Colonic mucosa (tissue), 4 donors: ENCODE measurements at regions of chr4 and their contacts with region 1.

Region 1: DNA sequence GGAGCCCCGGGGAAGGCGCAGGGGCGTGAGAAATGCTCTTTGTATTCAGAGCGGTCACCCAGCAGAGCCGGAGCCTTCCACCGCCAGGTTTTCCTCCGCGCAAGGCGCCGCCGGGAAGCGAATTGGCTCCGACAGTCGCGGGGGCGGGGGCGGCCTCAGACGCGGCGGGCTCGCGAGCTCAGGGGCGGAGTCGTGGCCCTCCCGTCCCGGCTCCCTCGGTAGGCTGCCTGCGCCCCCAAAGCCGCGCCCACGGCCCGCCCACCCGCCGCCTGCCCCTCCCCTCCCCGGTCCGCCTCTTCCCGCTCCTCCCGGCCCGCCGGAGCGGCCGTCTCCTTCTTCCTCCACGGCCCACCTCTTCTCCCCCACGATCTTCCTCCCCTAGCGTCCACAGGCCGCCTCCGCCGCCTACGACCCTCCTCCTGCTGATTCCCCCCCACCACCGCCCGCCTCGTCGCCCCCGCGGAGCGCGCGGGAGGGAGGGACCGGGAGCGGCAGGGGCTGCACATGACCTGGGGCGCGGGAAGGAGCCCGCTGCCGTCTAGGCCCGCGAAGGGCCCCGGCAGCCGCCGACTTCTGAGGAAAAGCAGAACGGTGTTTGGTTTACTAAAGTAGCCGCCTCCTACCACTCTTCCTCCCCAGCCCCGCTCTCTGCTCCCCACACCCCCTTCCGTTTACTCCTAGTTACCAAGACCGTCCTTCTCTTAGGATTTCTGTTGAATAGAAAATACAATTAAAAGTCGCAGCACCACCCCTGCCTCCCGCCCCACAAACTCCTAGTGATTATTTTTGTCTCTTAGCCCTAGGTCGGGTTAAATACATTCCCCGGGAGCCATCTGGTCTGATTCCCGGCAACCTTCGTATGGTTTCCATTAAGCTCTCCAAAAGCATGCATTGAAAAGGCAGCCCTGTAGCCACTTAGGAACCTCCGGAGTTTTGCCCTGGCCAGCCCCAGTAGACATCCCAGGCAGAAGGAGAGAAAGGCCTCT is 53.2 kb downstream of the C4orf51 start:
- DNase-seq: peak; percentile 91
- H3K4me3 ChIP-seq: peak overlapping the region; percentile 48
- H3K27ac ChIP-seq: peak overlapping the region; percentile 87
- H3K4me1 ChIP-seq: peaks cover 10% of the 10 kb centered on the region
- H3K27me3 ChIP-seq: no peaks in the 10 kb centered on the region
- CTCF ChIP-seq: no peak

Region 2: DNA sequence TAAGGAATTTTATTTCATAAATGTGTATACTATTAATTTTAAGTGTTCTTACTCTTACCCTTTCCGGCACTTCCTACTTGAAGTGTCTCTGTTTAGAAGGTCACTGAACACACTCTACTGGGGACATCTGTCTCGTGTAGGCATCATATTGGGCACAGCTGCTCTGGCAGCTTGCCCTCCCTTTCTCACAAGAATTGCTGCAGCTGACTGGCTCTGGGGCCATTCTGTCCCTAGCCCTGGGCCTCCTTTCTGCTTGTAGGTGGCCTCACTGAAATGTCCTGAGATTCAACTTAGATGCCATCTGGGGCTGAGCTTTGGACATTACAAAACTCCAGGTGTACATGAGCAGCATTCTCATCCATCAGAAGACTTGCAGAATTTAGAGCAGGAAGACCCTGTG is 202.0 kb before region 1 on chr4:
- intact Hi-C with region 1: no loop called
- DNase-seq: no peak
- H3K4me3 ChIP-seq: no peak overlapping the region
- H3K27ac ChIP-seq: no peak overlapping the region
- H3K4me1 ChIP-seq: peaks cover 3% of the 10 kb centered on the region
- H3K27me3 ChIP-seq: no peaks in the 10 kb centered on the region
- CTCF ChIP-seq: no peak

Region 3: GRCh38 chr4:145623831-145624230 is 109.4 kb before region 1 on chr4:
- intact Hi-C with region 1: loop called (anchors 10 kb)
- DNase-seq: no peak
- H3K4me3 ChIP-seq: no peak overlapping the region
- H3K27ac ChIP-seq: no peak overlapping the region
- H3K4me1 ChIP-seq: no peaks in the 10 kb centered on the region
- H3K27me3 ChIP-seq: no peaks in the 10 kb centered on the region
- CTCF ChIP-seq: no peak